Dendritic cell treated with granulocyte-macrophage colony-stimulating factor and Interleukin-4, amounts not matched to agents 40 ng/mL and 50 ng/mL, for 4 days (primary cell): ENCODE measurements at regions of chr7 and their contacts with region 1.

Region 1: DNA sequence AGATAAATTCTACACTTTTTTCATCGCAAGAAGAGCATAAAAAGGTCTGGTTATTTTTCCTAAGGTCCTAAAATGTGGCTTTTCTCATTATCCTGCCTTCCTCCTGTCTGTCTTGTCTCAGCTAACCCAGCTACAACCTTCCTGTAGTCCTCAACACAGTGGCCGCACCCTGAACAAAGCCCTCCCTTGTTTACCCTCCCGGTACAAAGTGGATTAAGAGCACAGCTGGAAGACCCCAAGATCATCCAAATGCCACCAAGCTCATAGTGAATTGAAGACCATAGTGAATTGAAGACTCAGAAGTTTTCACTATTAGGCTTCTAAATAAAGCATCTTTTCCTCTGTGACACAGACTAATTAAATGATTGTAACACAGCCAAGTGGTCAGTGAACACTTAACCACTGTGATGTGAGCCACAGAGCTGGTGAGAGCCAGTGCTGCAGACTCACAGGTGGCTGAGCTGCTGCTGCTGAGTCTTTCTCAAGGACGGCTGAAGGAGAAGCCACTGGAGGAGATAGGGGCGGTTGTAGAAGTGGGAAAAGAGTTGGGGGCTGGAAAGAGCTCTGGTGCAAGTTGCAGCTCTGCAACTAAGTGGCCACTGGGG is 123.6 kb downstream of the ATXN7L1 start:
- H3K4me3 Mint-ChIP-seq: no peak overlapping the region
- H3K27ac Mint-ChIP-seq: no peak overlapping the region
- H3K4me1 Mint-ChIP-seq: no peaks in the 10 kb centered on the region
- H3K27me3 Mint-ChIP-seq: no peaks in the 10 kb centered on the region

Region 2: DNA sequence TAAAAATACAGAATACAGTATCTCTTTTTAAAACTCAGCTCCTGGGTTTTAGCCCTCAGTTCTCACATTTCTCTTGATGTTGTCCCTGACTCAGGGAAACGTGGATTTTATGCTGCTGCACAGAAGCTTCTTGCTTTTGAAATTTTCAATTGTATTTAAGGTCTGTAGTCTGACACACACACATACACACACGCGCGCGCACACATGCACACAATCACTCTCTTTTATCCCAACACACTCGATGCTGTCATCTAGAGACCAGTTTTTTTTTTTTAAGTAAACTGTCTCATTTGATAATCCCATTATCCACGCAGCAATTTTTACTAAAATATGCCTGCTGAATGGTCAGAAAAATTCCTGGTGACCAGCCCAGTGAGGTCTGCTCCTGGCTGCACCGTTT is 630.2 kb before region 1 on chr7:
- intact Hi-C with region 1: loop called (anchors 5 kb)
- H3K4me3 Mint-ChIP-seq: no peak overlapping the region
- H3K27ac Mint-ChIP-seq: no peak overlapping the region
- H3K4me1 Mint-ChIP-seq: peaks cover 19% of the 10 kb centered on the region
- H3K27me3 Mint-ChIP-seq: no peaks in the 10 kb centered on the region

Region 3: GRCh38 chr7:105866102-105866801 is 113.5 kb after region 1 on chr7:
- intact Hi-C with region 1: no loop called
- H3K4me3 Mint-ChIP-seq: no peak overlapping the region
- H3K27ac Mint-ChIP-seq: no peak overlapping the region
- H3K4me1 Mint-ChIP-seq: peaks cover 9% of the 10 kb centered on the region
- H3K27me3 Mint-ChIP-seq: no peaks in the 10 kb centered on the region